Naive thymus-derived CD4-positive, alpha-beta T cell (primary cell): ENCODE measurements at regions of chr7 and their contacts with region 1.

Region 1: GRCh38 chr7:96075510-96076349 is 246.2 kb downstream of the SLC25A13 start:
- DNase-seq: peak; percentile 11 to 54 (median 48)
- ATAC-seq: peak; percentile 81
- H3K4me3 ChIP-seq: peak overlapping the region; percentile 58
- H3K4me3 Mint-ChIP-seq: peak overlapping the region; percentile 69 to 92 (median 86)
- H3K27ac ChIP-seq: no peak overlapping the region
- H3K27ac Mint-ChIP-seq: no peak overlapping the region
- H3K4me1 ChIP-seq: peaks cover 3 to 7% of the 10 kb centered on the region in 2 donors
- H3K4me1 Mint-ChIP-seq: peaks cover 6 to 12% (median 9%) of the 10 kb centered on the region in 7 donors
- H3K27me3 ChIP-seq: peaks cover 9 to 10% of the 10 kb centered on the region in 2 donors
- H3K27me3 Mint-ChIP-seq: peaks cover 49 to 60% (median 55%) of the 10 kb centered on the region in 5 donors

Region 2: DNA sequence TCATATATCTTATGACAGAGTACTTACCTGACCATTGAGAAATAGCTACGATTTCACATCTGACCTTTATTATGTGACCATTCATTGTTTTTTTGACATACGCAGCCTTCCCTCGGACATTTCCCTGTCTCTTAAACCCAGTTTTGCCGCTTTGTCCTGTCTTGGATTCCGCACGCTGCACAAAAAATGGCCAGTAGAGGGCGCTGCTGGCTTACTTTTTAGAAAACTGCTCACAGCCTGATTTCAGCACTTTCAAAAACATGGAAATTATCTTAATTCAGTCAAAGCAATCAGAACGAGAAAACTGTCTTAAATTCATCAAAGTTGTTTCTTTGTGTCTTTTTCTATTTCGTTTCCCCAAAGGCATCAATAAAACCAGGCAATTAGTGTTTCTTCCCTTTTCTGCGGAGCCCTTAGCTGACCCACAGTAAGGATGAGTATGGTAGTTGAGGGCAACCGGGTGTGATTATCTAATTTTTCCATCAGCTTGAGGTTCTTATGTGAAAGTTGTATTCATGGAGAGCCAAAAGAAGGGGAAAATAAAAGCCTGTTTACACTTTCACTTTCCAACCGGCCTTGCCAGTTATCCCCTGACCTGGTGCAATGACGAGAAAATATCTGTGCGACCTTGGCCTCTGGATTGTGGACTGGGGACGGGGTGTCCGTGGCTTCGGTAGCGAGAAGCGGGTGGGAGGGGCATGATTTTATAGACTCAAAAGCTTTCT is 159.0 kb before region 1 on chr7:
- CTCF ChIA-PET with region 1: interaction called, 3 read pairs
- POLR2A ChIA-PET with region 1: no interaction called
- intact Hi-C with region 1: loop called in 1 of 2 experiments (anchors 1 kb)
- DNase-seq: peak; percentile 26 to 66 (median 49)
- ATAC-seq: peak; percentile 72
- H3K4me3 ChIP-seq: no peak overlapping the region
- H3K4me3 Mint-ChIP-seq: peak overlapping the region in 1 of 10 donors; percentile 51
- H3K27ac ChIP-seq: no peak overlapping the region
- H3K27ac Mint-ChIP-seq: no peak overlapping the region
- H3K4me1 ChIP-seq: no peaks in the 10 kb centered on the region
- H3K4me1 Mint-ChIP-seq: peaks cover 0 to 8% (median 0%) of the 10 kb centered on the region in 7 donors
- H3K27me3 ChIP-seq: no peaks in the 10 kb centered on the region
- H3K27me3 Mint-ChIP-seq: peaks cover 19 to 41% (median 34%) of the 10 kb centered on the region in 5 donors

Region 3: GRCh38 chr7:96407427-96407826 is 331.7 kb after region 1 on chr7:
- CTCF ChIA-PET with region 1: no interaction called
- POLR2A ChIA-PET with region 1: no interaction called
- intact Hi-C with region 1: no loop called
- DNase-seq: no peak
- ATAC-seq: no peak
- H3K4me3 ChIP-seq: no peak overlapping the region
- H3K4me3 Mint-ChIP-seq: no peak overlapping the region
- H3K27ac ChIP-seq: no peak overlapping the region
- H3K27ac Mint-ChIP-seq: no peak overlapping the region
- H3K4me1 ChIP-seq: no peaks in the 10 kb centered on the region
- H3K4me1 Mint-ChIP-seq: no peaks in the 10 kb centered on the region
- H3K27me3 ChIP-seq: no peaks in the 10 kb centered on the region
- H3K27me3 Mint-ChIP-seq: peaks cover 9 to 16% (median 14%) of the 10 kb centered on the region in 5 donors

Region 4: DNA sequence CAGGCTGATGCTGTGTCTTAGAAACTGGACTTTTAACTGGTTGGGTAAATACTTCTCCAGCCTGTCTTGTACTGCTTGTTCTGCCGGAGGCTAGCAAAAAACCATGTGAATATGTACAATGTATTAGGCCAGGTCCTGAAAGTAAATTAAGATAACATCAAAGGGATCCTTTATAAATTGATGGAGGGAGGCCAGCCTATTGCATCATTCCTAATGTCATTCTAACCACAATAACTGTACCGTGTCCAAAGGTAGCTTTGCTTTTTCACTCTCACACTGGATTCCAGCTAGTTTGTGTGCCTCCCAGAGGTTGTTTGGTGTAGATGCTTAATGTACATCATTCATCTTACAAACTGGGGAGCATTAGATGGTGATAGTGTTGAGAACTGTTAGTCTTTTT is 725.1 kb after region 1 on chr7:
- CTCF ChIA-PET with region 1: no interaction called
- POLR2A ChIA-PET with region 1: no interaction called
- intact Hi-C with region 1: loop called in 1 of 2 experiments (anchors 10 kb)
- DNase-seq: no peak
- ATAC-seq: no peak
- H3K4me3 ChIP-seq: no peak overlapping the region
- H3K4me3 Mint-ChIP-seq: no peak overlapping the region
- H3K27ac ChIP-seq: no peak overlapping the region
- H3K27ac Mint-ChIP-seq: no peak overlapping the region
- H3K4me1 ChIP-seq: no peaks in the 10 kb centered on the region
- H3K4me1 Mint-ChIP-seq: no peaks in the 10 kb centered on the region
- H3K27me3 ChIP-seq: no peaks in the 10 kb centered on the region
- H3K27me3 Mint-ChIP-seq: peaks cover 11 to 47% (median 34%) of the 10 kb centered on the region in 5 donors

Region 5: GRCh38 chr7:97179454-97180104 is 1103.8 kb after region 1 on chr7:
- CTCF ChIA-PET with region 1: no interaction called
- POLR2A ChIA-PET with region 1: no interaction called
- intact Hi-C with region 1: loop called (anchors 1 to 5 kb)
- DNase-seq: peak in 7 of 9 donors; percentile 18 to 63 (median 53)
- ATAC-seq: peak; percentile 88
- H3K4me3 ChIP-seq: no peak overlapping the region
- H3K4me3 Mint-ChIP-seq: no peak overlapping the region
- H3K27ac ChIP-seq: no peak overlapping the region
- H3K27ac Mint-ChIP-seq: no peak overlapping the region
- H3K4me1 ChIP-seq: no peaks in the 10 kb centered on the region
- H3K4me1 Mint-ChIP-seq: peaks cover 0 to 4% (median 0%) of the 10 kb centered on the region in 7 donors
- H3K27me3 ChIP-seq: no peaks in the 10 kb centered on the region
- H3K27me3 Mint-ChIP-seq: no peaks in the 10 kb centered on the region

Region 6: DNA sequence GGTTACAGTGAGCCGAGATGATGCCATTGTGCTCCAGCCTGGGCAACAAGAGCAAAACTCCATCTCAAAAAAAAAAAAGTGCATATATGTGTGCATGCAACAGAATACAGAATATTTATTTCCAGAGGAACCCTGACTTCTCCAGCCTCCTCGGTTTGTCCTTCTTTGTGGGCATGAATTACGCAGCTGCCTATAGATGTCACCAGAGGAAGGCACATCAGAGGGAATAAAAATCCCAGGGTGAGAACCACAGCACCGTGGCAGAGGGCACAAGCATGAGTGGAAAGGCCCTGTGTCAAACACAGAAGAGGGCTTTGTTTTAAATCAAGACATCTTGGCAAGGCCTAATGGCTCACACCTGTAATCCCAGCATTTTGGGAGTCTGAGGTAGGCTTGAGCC is 1938.6 kb after region 1 on chr7:
- CTCF ChIA-PET with region 1: no interaction called
- POLR2A ChIA-PET with region 1: no interaction called
- intact Hi-C with region 1: loop called in 1 of 2 experiments (anchors 10 kb)
- DNase-seq: no peak
- ATAC-seq: no peak
- H3K4me3 ChIP-seq: no peak overlapping the region
- H3K4me3 Mint-ChIP-seq: no peak overlapping the region
- H3K27ac ChIP-seq: no peak overlapping the region
- H3K27ac Mint-ChIP-seq: no peak overlapping the region
- H3K4me1 ChIP-seq: no peaks in the 10 kb centered on the region
- H3K4me1 Mint-ChIP-seq: peaks cover 0 to 2% (median 0%) of the 10 kb centered on the region in 7 donors
- H3K27me3 ChIP-seq: no peaks in the 10 kb centered on the region
- H3K27me3 Mint-ChIP-seq: peaks cover 0 to 12% (median 5%) of the 10 kb centered on the region in 5 donors